ENCODE measurements at regions of chr5 and their contacts with region 1.

Region 1: DNA sequence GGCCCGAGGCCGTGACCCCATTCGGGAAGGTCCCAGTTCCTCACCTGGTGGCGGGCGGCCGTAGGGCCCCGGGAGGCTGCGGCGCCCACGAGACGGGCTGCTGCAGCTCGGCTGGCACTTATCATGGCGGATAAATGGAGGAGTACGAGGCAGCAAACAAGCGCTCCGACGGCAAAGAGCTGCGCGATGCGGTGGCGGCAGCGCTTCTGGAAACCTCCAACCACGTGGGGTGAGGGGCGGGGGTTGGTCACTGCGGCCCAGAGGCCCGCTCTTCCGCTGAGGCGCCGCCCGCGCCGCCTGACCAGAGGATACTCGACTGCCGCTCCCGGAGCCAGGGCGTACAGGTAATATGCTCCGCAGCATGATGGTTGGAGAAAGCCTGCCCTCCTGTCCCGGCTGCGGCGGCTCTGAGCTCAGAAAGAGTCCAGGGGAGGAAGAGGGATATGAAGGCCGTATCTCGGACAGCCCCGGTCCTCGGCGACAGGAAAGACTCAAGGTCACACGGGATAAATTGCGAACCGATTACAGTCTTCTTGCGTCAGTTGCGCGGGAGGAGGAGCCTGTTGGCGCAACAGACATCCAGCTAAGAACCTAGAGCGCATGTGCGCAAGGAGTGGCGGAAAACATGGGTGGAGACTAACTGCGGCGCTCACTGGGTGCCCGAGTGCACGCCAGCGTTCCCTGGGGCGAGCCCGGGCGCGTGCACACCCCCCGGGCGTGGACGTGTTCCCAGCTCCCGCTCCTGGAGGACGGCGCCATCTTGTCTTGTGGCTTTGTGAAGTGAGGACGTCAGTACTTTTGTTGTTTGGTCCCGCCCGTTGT is at the start of gene HSPA9:
- DNase-seq: peak; percentile 99 to 100
- ATAC-seq: peak; percentile 91 to 92
- H3K4me3 ChIP-seq: peak within 1 kb of the TSS; percentile 96
- H3K27ac ChIP-seq: peak within 1 kb of the TSS; percentile 98 to 99
- H3K4me1 ChIP-seq: peaks cover 35% of the 10 kb centered on the region
- CTCF ChIP-seq: no peak
- EP300 ChIP-seq: peak in 1 of 2 experiments; percentile 65; a peak in 2 of 5 replicates
- POLR2A ChIP-seq: peak; percentile 72
- RAD21 ChIP-seq: no peak
- polyA plus RNA-seq, gene HSPA9: 544 and 615 TPM in 2 replicates

Region 2: GRCh38 chr5:138542956-138543729 is 32.3 kb before region 1 on chr5 and contains the start of gene ETF1:
- CTCF ChIA-PET with region 1: no interaction called
- POLR2A ChIA-PET with region 1: interaction called, 21 read pairs
- DNase-seq: peak; percentile 96 to 99
- ATAC-seq: peak; percentile 83 to 92
- H3K4me3 ChIP-seq: peak within 1 kb of the TSS; percentile 100
- H3K27ac ChIP-seq: peak within 1 kb of the TSS; percentile 93 to 98
- H3K4me1 ChIP-seq: peaks cover 47% of the 10 kb centered on the region
- CTCF ChIP-seq: no peak
- EP300 ChIP-seq: no peak
- POLR2A ChIP-seq: peak; percentile 76
- RAD21 ChIP-seq: no peak
- polyA plus RNA-seq, gene ETF1: 140 and 161 TPM in 2 replicates

Region 3: GRCh38 chr5:138594305-138595058 is 19.1 kb after region 1 on chr5:
- CTCF ChIA-PET with region 1: interaction called, 38 read pairs
- POLR2A ChIA-PET with region 1: interaction called, 5 read pairs
- DNase-seq: no peak
- ATAC-seq: 0 out of 6 replicates have a peak, but pooled peaks of 1 of the 2 experiments have one; percentile 41
- H3K4me3 ChIP-seq: no peak overlapping the region
- H3K27ac ChIP-seq: no peak overlapping the region
- H3K4me1 ChIP-seq: no peaks in the 10 kb centered on the region
- CTCF ChIP-seq: peak; percentile 8; the same call in 1 of the 3 replicates
- EP300 ChIP-seq: no peak
- POLR2A ChIP-seq: no peak
- RAD21 ChIP-seq: no peak

Region 4: GRCh38 chr5:138641547-138642298 is 66.3 kb after region 1 on chr5:
- CTCF ChIA-PET with region 1: interaction called, 13 read pairs
- POLR2A ChIA-PET with region 1: no interaction called
- DNase-seq: peak; percentile 62 to 65
- ATAC-seq: peak; percentile 74 to 91; a peak in 5 of 6 replicates
- H3K4me3 ChIP-seq: no peak overlapping the region
- H3K27ac ChIP-seq: no peak overlapping the region
- H3K4me1 ChIP-seq: no peaks in the 10 kb centered on the region
- CTCF ChIP-seq: peak; percentile 84
- EP300 ChIP-seq: no peak
- POLR2A ChIP-seq: no peak
- RAD21 ChIP-seq: peak; percentile 82 to 91

Region 5: GRCh38 chr5:139273572-139274289 is 698.3 kb after region 1 on chr5:
- CTCF ChIA-PET with region 1: interaction called, 5 read pairs
- POLR2A ChIA-PET with region 1: interaction called, 10 read pairs
- DNase-seq: peak; percentile 89 to 93
- ATAC-seq: peak; percentile 92 to 94
- H3K4me3 ChIP-seq: peak overlapping the region; percentile 80
- H3K27ac ChIP-seq: peak overlapping the region; percentile 94 to 97
- H3K4me1 ChIP-seq: peaks cover 62% of the 10 kb centered on the region
- CTCF ChIP-seq: no peak
- EP300 ChIP-seq: no peak
- POLR2A ChIP-seq: peak; percentile 92
- RAD21 ChIP-seq: no peak

Measured in A549 (cell line).